ENCODE measurements at regions of chr6 and their contacts with region 1.

Region 1: DNA sequence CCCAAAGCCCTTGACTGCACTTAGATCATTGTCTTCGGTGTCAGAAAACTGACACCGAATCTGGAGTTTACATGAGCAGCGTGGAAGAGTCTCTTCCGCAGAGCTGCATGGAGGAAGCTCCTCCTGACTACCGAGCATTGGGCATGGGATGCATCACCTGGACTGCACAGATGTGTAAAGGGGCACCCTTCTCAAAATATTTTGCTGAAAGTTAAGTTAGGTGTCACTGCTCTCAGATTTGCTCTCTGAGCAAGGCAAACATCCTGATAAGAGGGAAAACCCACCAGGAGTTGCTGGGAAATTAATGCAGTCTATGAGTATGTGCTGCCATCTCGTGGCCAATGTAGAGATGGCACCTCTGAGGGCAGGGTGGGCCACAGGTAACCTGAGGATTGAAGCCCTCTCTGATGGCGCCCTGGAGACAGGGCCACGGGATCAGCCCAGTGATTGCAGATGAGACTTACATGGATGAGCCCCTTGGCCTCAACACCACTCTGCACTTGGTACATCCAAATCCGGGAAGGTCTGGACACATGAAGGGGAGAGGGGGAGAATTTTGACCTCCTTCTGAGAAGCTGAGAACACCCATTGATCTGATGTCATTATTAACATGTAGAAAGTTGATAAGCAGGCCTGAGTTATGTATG is 129.9 kb downstream of the LPA start:
- DNase-seq: peak; percentile 44
- CTCF ChIP-seq: peak; percentile 86

Region 2: GRCh38 chr6:160137989-160138835 is 396.0 kb before region 1 on chr6:
- CTCF ChIA-PET with region 1: interaction called, 10 read pairs
- POLR2A ChIA-PET with region 1: no interaction called
- DNase-seq: peak; percentile 64
- CTCF ChIP-seq: peak; percentile 86

Region 3: GRCh38 chr6:160510199-160510598 is 24.0 kb before region 1 on chr6:
- CTCF ChIA-PET with region 1: interaction called, 11 read pairs
- POLR2A ChIA-PET with region 1: no interaction called
- DNase-seq: no peak
- CTCF ChIP-seq: no peak

Region 4: DNA sequence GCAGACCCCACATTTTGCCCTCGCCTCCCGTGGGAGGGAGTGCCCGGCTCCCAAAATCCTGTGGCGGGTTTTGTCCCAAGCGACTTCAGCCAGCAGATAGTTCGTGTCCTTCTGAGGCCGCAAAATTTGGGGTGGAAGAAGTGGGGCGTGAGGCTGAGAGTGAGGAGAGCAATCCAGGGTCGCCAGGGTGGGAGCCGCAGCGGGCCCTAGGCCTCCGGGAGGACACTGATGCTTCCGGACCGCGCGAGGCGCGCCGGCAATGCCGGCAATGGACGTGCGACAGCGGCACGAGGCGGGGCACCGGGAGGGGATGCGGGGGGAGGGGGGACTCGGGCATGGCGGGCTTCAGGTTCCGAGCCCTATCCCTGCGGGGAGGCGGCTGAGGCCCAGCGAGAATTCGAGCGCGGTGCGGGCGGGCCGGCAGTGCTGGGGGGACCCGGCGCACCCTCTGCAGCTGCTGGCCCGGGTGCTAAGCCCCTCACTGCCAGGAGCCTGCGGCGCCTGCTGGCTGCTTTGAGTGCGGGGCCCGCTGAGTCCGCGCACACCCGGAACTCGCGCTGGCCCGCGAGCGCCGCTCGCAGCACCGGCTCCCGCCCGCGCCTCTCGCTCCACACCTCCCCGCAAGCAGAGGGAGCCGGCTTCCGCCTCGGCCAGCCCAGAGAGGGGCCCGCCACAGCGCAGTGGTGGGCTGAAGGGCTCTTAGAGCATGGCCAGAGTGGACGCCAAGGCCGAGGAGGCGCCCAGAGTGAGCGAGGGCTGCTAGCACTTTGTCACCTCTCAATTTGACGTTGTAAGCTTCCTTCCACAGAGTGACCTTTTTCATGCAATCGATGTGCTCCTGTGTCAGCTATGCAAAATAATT is 13.9 kb before region 1 on chr6:
- CTCF ChIA-PET with region 1: interaction called, 127 read pairs
- POLR2A ChIA-PET with region 1: no interaction called
- DNase-seq: peak; percentile 48
- CTCF ChIP-seq: no peak

Region 5: DNA sequence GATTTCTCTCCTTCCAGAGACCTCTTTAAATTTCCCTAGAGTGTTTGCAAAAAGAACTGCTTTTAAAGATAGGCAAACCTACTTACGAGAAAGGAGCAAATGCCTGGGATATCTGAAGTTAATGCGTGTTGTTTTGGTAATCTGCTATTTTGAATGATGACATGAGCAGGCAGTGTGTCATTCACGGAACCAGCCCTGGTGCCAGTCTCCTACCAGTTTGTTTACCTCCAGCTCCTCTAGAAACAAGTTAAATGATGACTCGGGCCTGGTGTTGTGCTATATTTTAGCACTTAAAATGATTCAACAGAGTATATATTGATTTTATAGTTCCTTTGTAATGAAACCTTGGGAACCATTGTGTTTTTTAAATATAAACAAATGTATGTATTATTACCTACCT is 416.3 kb after region 1 on chr6:
- CTCF ChIA-PET with region 1: no interaction called
- POLR2A ChIA-PET with region 1: no interaction called
- DNase-seq: no peak
- CTCF ChIP-seq: no peak

Measured in GM10248 (cell line).